ENCODE measurements at regions of chr12 and their contacts with region 1.

Region 1: DNA sequence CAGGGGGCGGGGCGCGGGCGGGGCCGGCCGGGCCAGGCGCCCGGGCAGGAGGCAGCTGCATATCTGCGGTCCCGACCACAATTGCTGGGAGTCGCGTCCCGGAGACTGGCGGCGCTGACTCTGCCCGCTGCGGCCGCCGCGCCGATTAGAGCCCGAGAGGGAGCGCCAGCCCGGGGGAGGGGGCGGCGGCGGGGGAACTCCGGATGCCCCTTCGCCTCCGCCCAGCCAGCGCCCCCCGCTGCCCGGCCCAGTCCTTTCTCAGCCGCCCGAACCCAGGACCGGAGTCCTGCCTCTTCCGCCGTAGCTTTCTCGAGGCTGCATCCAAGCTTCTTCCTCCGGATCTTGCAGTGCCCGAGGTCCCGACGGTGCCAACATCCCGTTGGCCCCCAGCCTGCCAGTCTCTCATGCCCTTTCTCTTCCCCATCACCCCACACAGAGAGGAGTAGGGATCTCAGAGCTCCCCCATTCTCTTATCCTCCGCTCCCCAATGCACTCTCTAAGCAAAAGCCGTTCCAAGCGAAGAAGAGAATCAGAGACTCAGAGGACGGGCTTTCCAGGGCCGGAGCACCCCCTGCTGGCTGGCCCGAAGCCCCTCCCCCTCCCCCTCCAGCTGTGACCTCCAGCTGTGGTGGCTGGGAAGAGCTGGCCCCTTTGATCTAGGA is 8.8 kb upstream of the SP7 start:
- DNase-seq: peak; percentile 54
- ATAC-seq: peak; percentile 87
- H3K4me3 ChIP-seq: peak overlapping the region; percentile 79 to 91 (median 82)
- H3K27ac ChIP-seq: no peak overlapping the region
- H3K4me1 ChIP-seq: peaks cover 17% of the 10 kb centered on the region
- H3K27me3 ChIP-seq: peaks cover 1 to 30% of the 10 kb centered on the region in 2 experiments; a peak in 4 of 5 replicates
- CTCF ChIP-seq: peak; percentile 90
- EP300 ChIP-seq: no peak
- POLR2A ChIP-seq: no peak
- RAD21 ChIP-seq: peak; percentile 73

Region 2: DNA sequence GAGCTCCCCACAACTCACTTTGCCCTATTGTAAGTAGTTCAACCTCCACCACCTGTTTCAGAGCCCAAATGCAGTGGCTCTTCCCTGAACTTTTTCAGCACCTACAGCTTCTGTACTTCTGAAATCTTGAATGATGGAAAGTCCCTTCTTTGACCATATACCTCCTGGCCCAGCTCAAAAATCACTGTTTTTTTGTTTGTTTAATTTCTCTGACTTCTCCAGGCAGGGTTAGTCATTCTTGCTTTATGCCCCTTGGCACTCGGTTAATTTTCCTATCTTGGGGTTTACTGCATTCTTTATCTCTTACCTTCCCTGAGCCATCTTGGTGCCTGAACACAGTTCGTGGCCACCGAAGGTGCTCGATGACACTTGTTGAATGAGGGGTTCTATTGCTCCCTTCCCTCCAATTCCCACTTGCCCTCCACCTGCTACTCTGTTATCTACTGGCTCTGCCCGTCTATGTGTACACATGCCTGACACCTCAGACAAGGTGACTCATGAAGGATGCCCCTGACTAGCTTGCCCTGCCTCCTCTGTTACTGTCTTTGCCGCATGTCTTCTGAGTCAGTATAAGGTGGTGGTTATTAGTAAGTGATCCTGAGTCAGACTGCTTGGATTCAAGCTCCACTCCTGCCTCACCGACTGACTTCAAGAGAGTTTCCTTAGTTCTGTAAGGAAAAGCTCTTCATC is 83.1 kb after region 1 on chr12:
- CTCF ChIA-PET with region 1: no interaction called
- POLR2A ChIA-PET with region 1: interaction called, 4 read pairs
- in situ Hi-C with region 1: loop called (anchors 5 kb)
- intact Hi-C with region 1: no loop called
- DNase-seq: no peak
- ATAC-seq: no peak
- H3K4me3 ChIP-seq: no peak overlapping the region
- H3K27ac ChIP-seq: no peak overlapping the region
- H3K4me1 ChIP-seq: peaks cover 51% of the 10 kb centered on the region
- H3K27me3 ChIP-seq: 0 out of 5 replicates have a peak, but pooled peaks cover 0 to 4% of the 10 kb centered on the region in 2 experiments
- CTCF ChIP-seq: no peak
- EP300 ChIP-seq: no peak
- POLR2A ChIP-seq: no peak
- RAD21 ChIP-seq: no peak